ENCODE measurements at regions of chr10 and their contacts with region 1.

Region 1: GRCh38 chr10:7872041-7872442 is 53.7 kb downstream of the TAF3 start:
- DNase-seq: no peak
- ATAC-seq: no peak
- H3K4me3 ChIP-seq: peak overlapping the region; percentile 33 to 56
- H3K27ac ChIP-seq: peak overlapping the region; percentile 34; the same call in 1 of the 2 replicates
- H3K4me1 ChIP-seq: no peaks in the 10 kb centered on the region
- H3K27me3 ChIP-seq: no peaks in the 10 kb centered on the region
- CTCF ChIP-seq: peak; percentile 71; the same call in 1 of the 2 replicates

Region 2: DNA sequence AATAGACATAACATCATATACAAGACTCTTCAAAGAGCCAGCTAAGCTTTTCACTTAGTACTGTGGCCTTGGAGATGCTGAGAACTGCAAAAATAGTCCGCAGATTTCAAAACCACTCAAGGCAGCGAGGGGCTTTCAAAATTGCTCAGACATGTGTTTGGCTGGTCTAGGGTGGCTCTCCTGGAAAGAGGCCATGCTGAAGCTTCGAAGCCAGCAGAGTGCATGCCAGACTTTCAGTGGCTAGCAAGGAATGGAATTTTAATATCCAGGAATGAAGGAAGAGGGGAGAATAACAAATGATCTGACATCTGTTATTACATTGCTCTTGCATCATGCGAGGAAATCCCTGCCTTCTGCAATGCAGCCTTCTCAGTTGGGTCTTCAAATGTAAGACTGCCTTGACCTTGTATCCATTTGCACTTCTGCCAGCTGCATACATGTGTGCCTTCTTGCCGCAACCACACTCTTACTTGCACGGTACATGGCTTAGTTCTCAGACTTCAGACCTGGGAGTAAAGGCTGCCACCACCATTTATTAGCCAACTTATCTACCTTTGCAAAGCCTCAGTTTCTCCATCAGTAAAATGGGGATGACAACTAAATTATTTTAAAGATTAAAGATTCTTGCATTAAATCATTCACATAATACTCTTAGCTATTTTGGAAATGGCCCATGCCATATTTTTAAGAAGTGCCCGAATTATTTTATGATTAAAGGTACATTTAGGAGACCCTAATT is 261.2 kb before region 1 on chr10:
- CTCF ChIA-PET with region 1: no interaction called
- POLR2A ChIA-PET with region 1: no interaction called
- in situ Hi-C with region 1: no loop called
- intact Hi-C with region 1: no loop called
- DNase-seq: no peak
- ATAC-seq: no peak
- H3K4me3 ChIP-seq: no peak overlapping the region
- H3K27ac ChIP-seq: no peak overlapping the region
- H3K4me1 ChIP-seq: no peaks in the 10 kb centered on the region
- H3K27me3 ChIP-seq: no peaks in the 10 kb centered on the region
- CTCF ChIP-seq: no peak

Region 3: DNA sequence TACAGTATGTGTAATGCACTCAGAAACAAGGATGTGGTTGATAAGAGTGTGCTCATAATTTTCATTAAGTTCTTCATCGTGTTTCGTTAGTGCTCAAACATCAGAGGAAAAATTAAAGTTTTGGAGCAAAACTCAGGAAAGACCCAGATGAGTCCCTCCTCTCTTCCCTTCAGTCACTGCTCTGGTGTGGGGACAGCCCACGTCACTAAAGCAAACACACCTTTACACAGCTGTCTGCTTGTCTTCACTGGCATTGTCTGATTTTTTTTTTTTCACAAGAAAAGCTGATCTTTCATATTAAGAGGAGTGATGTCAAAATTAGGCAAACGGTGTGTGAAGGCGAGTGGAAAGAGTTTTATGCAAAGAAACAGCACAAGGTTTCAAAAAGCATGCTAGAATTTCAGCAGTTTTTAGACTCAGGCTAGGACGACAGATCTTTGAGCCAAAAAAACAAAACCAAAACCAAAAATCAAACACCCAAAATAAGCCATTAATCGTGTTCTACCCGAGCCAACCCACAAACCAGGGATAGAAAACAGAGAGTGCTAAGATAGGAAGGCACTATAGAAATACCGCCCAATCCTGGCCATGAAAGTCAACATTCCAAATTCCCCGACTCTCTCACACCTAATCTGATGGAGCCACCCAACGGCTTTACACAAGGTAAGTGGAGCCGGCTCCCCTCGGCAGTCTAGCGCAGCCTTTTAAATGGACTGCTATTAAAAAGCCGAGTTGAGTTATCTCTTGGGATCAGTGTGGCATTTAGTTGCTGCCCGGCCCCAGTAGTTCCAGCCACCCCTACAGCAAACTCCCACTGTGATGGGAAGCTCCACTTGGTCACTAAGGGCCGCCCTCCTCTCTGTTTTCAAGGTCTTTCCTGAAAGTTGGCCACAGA is 154.6 kb after region 1 on chr10:
- CTCF ChIA-PET with region 1: no interaction called
- POLR2A ChIA-PET with region 1: interaction called, 13 read pairs
- in situ Hi-C with region 1: no loop called
- intact Hi-C with region 1: no loop called
- DNase-seq: no peak
- ATAC-seq: peak; percentile 73
- H3K4me3 ChIP-seq: peak overlapping the region; percentile 7 to 45; a peak in 3 of 4 replicates
- H3K27ac ChIP-seq: no peak overlapping the region
- H3K4me1 ChIP-seq: no peaks in the 10 kb centered on the region
- H3K27me3 ChIP-seq: no peaks in the 10 kb centered on the region
- CTCF ChIP-seq: no peak

Region 4: DNA sequence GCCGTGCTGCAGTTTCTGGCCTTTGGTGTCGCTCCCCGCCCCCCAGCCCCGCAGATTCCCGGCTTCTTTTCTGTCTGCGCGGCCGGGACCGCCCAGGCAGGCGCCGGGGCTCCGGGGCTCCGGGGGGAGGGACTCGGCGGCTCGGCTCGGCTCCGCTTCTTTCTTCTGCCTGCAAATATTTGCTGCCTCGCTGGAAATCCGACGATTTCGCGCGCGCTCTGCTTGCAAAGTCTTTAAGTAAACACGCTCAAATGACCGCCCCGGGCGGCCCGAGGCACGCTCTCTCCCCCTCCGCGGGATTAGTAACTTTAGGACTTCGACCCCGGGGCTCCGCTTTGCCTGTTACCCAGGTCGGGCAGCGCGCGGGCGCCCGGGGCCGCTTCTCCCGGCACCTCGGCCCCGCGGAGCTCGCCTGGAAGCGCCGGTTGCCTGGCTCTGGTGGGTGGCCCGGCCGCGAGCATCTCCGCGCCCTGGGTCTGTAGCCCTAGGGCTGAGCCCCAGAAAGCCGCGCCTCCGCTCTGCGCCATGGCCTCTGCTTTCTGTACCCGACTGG is 178.6 kb after region 1 on chr10:
- CTCF ChIA-PET with region 1: no interaction called
- POLR2A ChIA-PET with region 1: no interaction called
- in situ Hi-C with region 1: no loop called
- intact Hi-C with region 1: loop called (anchors 2 kb)
- DNase-seq: no peak
- ATAC-seq: 0 out of 2 replicates have a peak, but pooled peaks have one; percentile 9
- H3K4me3 ChIP-seq: peak overlapping the region; percentile 53 to 58
- H3K27ac ChIP-seq: no peak overlapping the region
- H3K4me1 ChIP-seq: no peaks in the 10 kb centered on the region
- H3K27me3 ChIP-seq: no peaks in the 10 kb centered on the region
- CTCF ChIP-seq: no peak

Region 5: GRCh38 chr10:8705415-8705814 is 833.4 kb after region 1 on chr10:
- CTCF ChIA-PET with region 1: no interaction called
- POLR2A ChIA-PET with region 1: no interaction called
- in situ Hi-C with region 1: no loop called
- intact Hi-C with region 1: loop called (anchors 10 kb)
- DNase-seq: no peak
- ATAC-seq: no peak
- H3K4me3 ChIP-seq: no peak overlapping the region
- H3K27ac ChIP-seq: peak overlapping the region; percentile 82; the same call in 1 of the 2 replicates
- H3K4me1 ChIP-seq: peaks cover 12% of the 10 kb centered on the region; the same call in 1 of the 2 replicates
- H3K27me3 ChIP-seq: no peaks in the 10 kb centered on the region
- CTCF ChIP-seq: no peak

Region 6: GRCh38 chr10:9209105-9209798 is 1337.2 kb after region 1 on chr10:
- CTCF ChIA-PET with region 1: no interaction called
- POLR2A ChIA-PET with region 1: no interaction called
- in situ Hi-C with region 1: no loop called
- intact Hi-C with region 1: loop called (anchors 5 kb)
- DNase-seq: peak; percentile 62
- ATAC-seq: peak; percentile 73; the same call in 1 of the 2 replicates
- H3K4me3 ChIP-seq: no peak overlapping the region
- H3K27ac ChIP-seq: no peak overlapping the region; the same call in 1 of the 2 replicates
- H3K4me1 ChIP-seq: no peaks in the 10 kb centered on the region; the same call in 1 of the 2 replicates
- H3K27me3 ChIP-seq: no peaks in the 10 kb centered on the region
- CTCF ChIP-seq: peak; percentile 78

Region 7: DNA sequence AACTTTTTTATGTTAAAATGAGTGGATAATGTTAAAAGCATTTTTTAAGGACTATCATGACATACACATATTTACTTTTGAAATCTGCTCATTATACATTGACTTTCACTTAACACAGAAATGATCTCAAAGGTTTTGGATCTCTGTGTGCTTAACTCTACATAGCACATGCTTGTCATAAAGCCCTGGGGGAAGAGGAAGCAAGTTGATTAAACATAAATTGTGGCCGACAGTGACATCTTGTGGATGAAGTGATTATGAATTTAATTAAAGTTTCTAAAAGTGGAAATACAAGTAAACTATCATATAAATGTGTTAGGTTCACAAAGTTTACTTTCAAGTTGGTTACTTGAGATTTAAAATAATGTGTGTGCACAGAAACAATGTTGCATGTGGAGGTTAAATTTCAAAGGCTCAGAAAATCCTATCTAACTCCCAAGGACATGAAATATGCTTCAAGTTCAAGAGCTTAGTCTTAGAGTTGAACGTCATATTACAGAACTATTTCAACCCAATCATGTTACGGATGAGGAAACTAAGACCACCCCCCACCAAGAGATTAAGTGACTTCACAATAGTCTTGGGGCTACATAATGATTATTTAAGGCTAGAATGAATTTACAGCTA is 1430.2 kb after region 1 on chr10:
- CTCF ChIA-PET with region 1: no interaction called
- POLR2A ChIA-PET with region 1: no interaction called
- in situ Hi-C with region 1: no loop called
- intact Hi-C with region 1: loop called (anchors 5 kb)
- DNase-seq: peak; percentile 39
- ATAC-seq: no peak
- H3K4me3 ChIP-seq: no peak overlapping the region
- H3K27ac ChIP-seq: no peak overlapping the region
- H3K4me1 ChIP-seq: no peaks in the 10 kb centered on the region
- H3K27me3 ChIP-seq: peaks cover 3% of the 10 kb centered on the region; the same call in 1 of the 2 replicates
- CTCF ChIP-seq: peak; percentile 29; the same call in 1 of the 2 replicates